Activated CD4-positive, alpha-beta memory T cell treated with anti-CD3 and anti-CD28 coated beads for 36 hours (primary cell): ENCODE measurements at regions of chr10 and their contacts with region 1.

Region 1: DNA sequence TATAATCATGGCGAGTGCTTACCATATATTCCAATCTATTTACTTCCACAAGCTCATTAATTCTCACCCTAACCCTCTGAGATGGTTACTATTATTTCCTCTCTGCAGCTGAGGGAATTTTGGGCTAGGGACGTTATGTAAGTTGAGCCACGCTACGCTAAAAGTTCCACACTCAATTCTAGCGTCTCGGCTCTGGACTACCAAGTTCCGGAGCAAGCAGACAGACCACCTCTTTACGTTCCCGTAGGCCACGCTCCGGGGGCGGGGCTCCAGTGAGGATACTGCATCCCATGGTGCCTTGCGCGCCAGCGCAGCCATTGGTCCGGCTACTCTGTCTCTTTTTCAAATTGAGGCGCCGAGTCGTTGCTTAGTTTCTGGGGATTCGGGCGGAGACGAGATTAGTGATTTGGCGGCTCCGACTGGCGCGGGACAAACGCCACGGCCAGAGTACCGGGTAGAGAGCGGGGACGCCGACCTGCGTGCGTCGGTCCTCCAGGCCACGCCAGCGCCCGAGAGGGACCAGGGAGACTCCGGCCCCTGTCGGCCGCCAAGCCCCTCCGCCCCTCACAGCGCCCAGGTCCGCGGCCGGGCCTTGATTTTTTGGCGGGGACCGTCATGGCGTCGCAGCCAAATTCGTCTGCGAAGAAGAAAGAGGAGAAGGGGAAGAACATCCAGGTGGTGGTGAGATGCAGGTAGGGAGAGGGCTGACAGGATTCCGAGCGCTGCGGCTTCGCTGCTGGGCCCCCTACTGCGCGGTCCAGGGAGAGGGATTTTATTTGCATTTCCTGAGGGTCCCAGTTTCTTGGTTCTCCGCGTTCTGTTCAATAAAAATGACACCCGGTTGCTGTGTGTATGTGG is at the start of gene KIF11:
- DNase-seq: peak; percentile 98
- H3K4me3 Mint-ChIP-seq: peak within 1 kb of the TSS; percentile 97
- H3K27ac Mint-ChIP-seq: peak within 1 kb of the TSS; percentile 100
- H3K4me1 Mint-ChIP-seq: peaks cover 40% of the 10 kb centered on the region
- H3K27me3 Mint-ChIP-seq: no peaks in the 10 kb centered on the region
- total RNA-seq, gene KIF11: 56.3 to 57.3 TPM

Region 2: GRCh38 chr10:91381257-91381891 is 1211.6 kb before region 1 on chr10:
- CTCF ChIA-PET with region 1: no interaction called
- POLR2A ChIA-PET with region 1: no interaction called
- intact Hi-C with region 1: no loop called
- DNase-seq: no peak
- H3K4me3 Mint-ChIP-seq: no peak overlapping the region
- H3K27ac Mint-ChIP-seq: no peak overlapping the region
- H3K4me1 Mint-ChIP-seq: peaks cover 14% of the 10 kb centered on the region
- H3K27me3 Mint-ChIP-seq: peaks cover 32% of the 10 kb centered on the region

Region 3: GRCh38 chr10:92087750-92088395 is 505.1 kb before region 1 on chr10:
- CTCF ChIA-PET with region 1: no interaction called
- POLR2A ChIA-PET with region 1: no interaction called
- intact Hi-C with region 1: loop called (anchors 5 kb)
- DNase-seq: peak; percentile 72
- H3K4me3 Mint-ChIP-seq: no peak overlapping the region
- H3K27ac Mint-ChIP-seq: no peak overlapping the region
- H3K4me1 Mint-ChIP-seq: peaks cover 10% of the 10 kb centered on the region
- H3K27me3 Mint-ChIP-seq: no peaks in the 10 kb centered on the region

Region 4: GRCh38 chr10:92517034-92517655 is 75.8 kb before region 1 on chr10:
- CTCF ChIA-PET with region 1: interaction called, 13 read pairs
- POLR2A ChIA-PET with region 1: interaction called, 4 read pairs
- intact Hi-C with region 1: loop called (anchors 1 kb)
- DNase-seq: peak; percentile 66
- H3K4me3 Mint-ChIP-seq: no peak overlapping the region
- H3K27ac Mint-ChIP-seq: no peak overlapping the region
- H3K4me1 Mint-ChIP-seq: peaks cover 6% of the 10 kb centered on the region
- H3K27me3 Mint-ChIP-seq: no peaks in the 10 kb centered on the region

Region 5: GRCh38 chr10:92640110-92640509 is 47.1 kb after region 1 on chr10:
- CTCF ChIA-PET with region 1: interaction called, 3 read pairs
- POLR2A ChIA-PET with region 1: no interaction called
- intact Hi-C with region 1: loop called (anchors 5 kb)
- DNase-seq: no peak
- H3K4me3 Mint-ChIP-seq: no peak overlapping the region
- H3K27ac Mint-ChIP-seq: no peak overlapping the region
- H3K4me1 Mint-ChIP-seq: peaks cover 5% of the 10 kb centered on the region
- H3K27me3 Mint-ChIP-seq: no peaks in the 10 kb centered on the region

Region 6: DNA sequence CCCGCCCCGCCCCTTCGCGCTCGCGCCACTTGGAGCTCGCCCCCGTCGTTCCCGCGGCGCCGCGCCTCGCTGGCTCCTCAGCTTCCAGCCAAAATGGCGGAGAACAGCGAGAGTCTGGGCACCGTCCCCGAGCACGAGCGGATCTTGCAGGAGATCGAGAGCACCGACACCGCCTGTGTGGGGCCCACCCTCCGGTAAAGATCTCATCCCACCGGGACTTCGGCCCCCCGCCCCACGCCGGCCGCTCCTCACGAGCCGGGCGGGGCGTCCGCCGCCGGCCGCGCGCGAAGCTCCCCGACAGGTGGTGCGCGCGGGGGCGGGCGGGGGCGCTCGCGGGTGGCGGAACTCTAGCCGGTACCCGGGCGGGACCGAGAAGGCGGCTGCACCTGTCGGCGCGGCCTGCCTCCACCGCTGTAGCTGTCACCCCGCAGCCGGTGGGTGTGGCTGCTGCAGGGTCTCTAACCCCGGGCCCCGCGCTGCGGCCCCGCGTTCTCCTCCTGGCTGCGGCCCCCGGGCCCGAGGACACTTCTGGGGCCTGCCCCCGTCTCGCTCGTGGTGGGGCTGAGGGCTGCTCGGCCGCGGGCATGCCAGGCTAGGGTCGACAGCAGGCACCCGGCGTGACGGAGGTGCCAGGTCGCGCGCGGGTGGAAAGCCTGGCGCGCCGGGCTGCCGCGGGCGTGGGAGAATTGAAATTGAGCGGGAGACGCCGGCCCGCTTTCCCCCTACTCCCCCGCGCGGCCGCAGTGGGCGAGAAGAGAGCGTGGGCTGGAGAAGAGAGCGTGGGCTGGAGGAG is 255.6 kb after region 1 on chr10 and contains the start of gene EXOC6:
- CTCF ChIA-PET with region 1: no interaction called
- POLR2A ChIA-PET with region 1: no interaction called
- intact Hi-C with region 1: loop called (anchors 2 kb)
- DNase-seq: peak; percentile 88
- H3K4me3 Mint-ChIP-seq: peak within 1 kb of the TSS; percentile 84
- H3K27ac Mint-ChIP-seq: peak within 1 kb of the TSS; percentile 74
- H3K4me1 Mint-ChIP-seq: peaks cover 41% of the 10 kb centered on the region
- H3K27me3 Mint-ChIP-seq: no peaks in the 10 kb centered on the region
- total RNA-seq, gene EXOC6: 10.7 to 10.8 TPM

Region 7: GRCh38 chr10:93702211-93703001 is 1109.4 kb after region 1 on chr10 and contains the start of gene FRA10AC1:
- CTCF ChIA-PET with region 1: no interaction called
- POLR2A ChIA-PET with region 1: no interaction called
- intact Hi-C with region 1: loop called (anchors 5 kb)
- DNase-seq: peak; percentile 92
- H3K4me3 Mint-ChIP-seq: no peak within 1 kb of the TSS
- H3K27ac Mint-ChIP-seq: no peak within 1 kb of the TSS
- H3K4me1 Mint-ChIP-seq: peaks cover 15% of the 10 kb centered on the region
- H3K27me3 Mint-ChIP-seq: no peaks in the 10 kb centered on the region
- total RNA-seq, gene FRA10AC1: 18.6 to 19.0 TPM